ENCODE measurements at regions of chr1 and their contacts with region 1.

Region 1: GRCh38 chr1:21232044-21232443 is 55.3 kb upstream of the EIF4G3 start:
- DNase-seq: no peak
- H3K4me3 ChIP-seq: no peak overlapping the region
- H3K27me3 ChIP-seq: no peaks in the 10 kb centered on the region
- CTCF ChIP-seq: peak; percentile 65

Region 2: GRCh38 chr1:20913242-20913641 is 318.8 kb before region 1 on chr1:
- CTCF ChIA-PET with region 1: no interaction called
- POLR2A ChIA-PET with region 1: no interaction called
- DNase-seq: no peak
- H3K4me3 ChIP-seq: no peak overlapping the region
- H3K27me3 ChIP-seq: no peaks in the 10 kb centered on the region
- CTCF ChIP-seq: no peak

Region 3: GRCh38 chr1:21216835-21217811 is 14.9 kb before region 1 on chr1:
- CTCF ChIA-PET with region 1: interaction called, 23 read pairs
- POLR2A ChIA-PET with region 1: no interaction called
- DNase-seq: no peak
- H3K4me3 ChIP-seq: no peak overlapping the region
- H3K27me3 ChIP-seq: no peaks in the 10 kb centered on the region
- CTCF ChIP-seq: peak; percentile 83

Region 4: GRCh38 chr1:21244986-21245687 is 13.1 kb after region 1 on chr1:
- CTCF ChIA-PET with region 1: interaction called, 25 read pairs
- POLR2A ChIA-PET with region 1: no interaction called
- DNase-seq: no peak
- H3K4me3 ChIP-seq: no peak overlapping the region
- H3K27me3 ChIP-seq: no peaks in the 10 kb centered on the region
- CTCF ChIP-seq: peak; percentile 50

Region 5: GRCh38 chr1:21362096-21362495 is 130.1 kb after region 1 on chr1:
- CTCF ChIA-PET with region 1: interaction called, 13 read pairs
- POLR2A ChIA-PET with region 1: no interaction called
- DNase-seq: no peak
- H3K4me3 ChIP-seq: no peak overlapping the region
- H3K27me3 ChIP-seq: no peaks in the 10 kb centered on the region
- CTCF ChIP-seq: no peak

Region 6: DNA sequence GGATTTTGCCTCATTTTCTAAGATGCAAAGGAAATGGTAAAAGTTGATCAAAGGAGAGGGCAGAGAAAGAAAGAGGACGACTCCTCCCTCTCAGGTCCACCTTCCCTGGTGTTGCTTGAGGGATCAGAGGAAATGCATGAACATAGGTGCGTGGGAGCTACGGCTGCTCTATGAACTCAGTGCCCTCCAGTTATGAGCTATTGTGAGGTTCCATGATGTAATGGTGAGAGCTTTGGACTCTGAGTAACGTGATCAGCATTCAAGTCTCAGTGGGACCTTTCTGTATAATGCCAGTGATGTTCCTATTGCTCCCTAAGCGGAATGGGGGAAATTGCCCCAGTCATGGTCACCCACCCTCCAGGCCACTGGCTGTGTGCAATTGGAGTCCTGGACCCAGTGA is 182.0 kb after region 1 on chr1:
- CTCF ChIA-PET with region 1: no interaction called
- POLR2A ChIA-PET with region 1: no interaction called
- DNase-seq: no peak
- H3K4me3 ChIP-seq: no peak overlapping the region
- H3K27me3 ChIP-seq: peaks cover 4% of the 10 kb centered on the region
- CTCF ChIP-seq: no peak

Region 7: DNA sequence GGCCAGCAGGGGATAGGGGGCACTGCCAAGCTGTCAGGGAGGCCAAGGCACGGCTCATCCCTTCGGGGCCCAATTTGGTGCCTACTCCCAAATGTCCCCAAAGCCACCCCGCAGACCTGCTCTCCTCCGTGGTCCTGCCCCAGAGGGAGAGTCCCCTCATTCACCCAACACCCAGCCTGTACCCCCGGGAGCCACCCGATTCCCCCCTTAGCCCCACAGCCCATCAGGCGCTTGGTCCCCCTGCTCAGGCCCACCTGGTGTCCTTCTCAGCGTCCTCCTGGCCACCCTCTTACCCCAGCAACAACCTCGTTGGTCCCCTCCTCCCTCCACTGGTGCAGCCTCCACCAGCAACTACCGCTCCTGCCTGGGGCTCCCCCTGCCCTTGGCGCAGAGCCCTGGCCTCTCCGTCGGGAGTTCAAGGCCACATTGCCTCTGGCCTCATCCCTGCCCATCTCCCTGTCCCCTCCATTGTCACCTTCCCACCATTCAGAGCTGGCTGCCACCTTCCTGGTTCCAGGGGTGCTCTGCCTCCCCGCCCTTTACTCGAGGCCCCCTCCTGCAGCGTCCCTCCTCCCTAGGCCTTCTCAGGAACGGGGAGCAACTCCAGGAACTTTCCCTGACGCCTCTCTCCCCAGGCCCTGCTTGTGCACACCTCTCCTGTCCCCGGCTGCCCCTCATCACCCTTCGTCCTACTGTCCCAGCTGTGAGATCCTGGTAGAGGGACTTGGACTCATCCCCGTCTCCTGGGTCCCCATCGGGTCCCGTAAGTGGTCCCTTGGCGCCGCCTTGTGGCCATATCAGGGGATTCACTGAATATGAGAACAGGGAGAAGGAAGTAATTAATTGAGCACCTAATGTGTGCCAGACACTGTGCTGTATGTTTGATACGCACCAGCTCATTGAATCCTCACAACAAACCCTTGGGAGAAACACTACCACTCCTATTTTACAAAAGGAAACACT is 363.2 kb after region 1 on chr1:
- CTCF ChIA-PET with region 1: interaction called, 10 read pairs
- POLR2A ChIA-PET with region 1: no interaction called
- DNase-seq: no peak
- H3K4me3 ChIP-seq: no peak overlapping the region
- H3K27me3 ChIP-seq: peaks cover 6% of the 10 kb centered on the region
- CTCF ChIP-seq: peak; percentile 81

Measured in BJ (cell line).